ENCODE measurements at regions of chr16 and their contacts with region 1.

Region 1: GRCh38 chr16:88194397-88195268 is 188.1 kb upstream of the ZNF469 start:
- DNase-seq: no peak
- H3K4me3 ChIP-seq: peak overlapping the region in 4 of 59 donors; percentile 8 to 35 (median 20)
- H3K27ac ChIP-seq: peak overlapping the region in 8 of 59 donors; percentile 11 to 64 (median 30)
- H3K27me3 ChIP-seq: no peaks in the 10 kb centered on the region
- CTCF ChIP-seq: peak in 9 of 56 donors; percentile 2 to 52 (median 18)

Region 2: GRCh38 chr16:88383401-88384221 is 189.0 kb after region 1 on chr16:
- intact Hi-C with region 1: loop called in 1 of 2 experiments (anchors 10 kb)
- DNase-seq: peak in 4 of 10 donors; percentile 37 to 61 (median 50)
- H3K4me3 ChIP-seq: peak overlapping the region in 58 of 59 donors; percentile 15 to 67 (median 48)
- H3K27ac ChIP-seq: peak overlapping the region in 6 of 59 donors; percentile 33 to 67 (median 42)
- H3K27me3 ChIP-seq: peaks cover 0 to 40% (median 8%) of the 10 kb centered on the region in 45 donors
- CTCF ChIP-seq: peak in 47 of 56 donors; percentile 11 to 63 (median 38)

Region 3: DNA sequence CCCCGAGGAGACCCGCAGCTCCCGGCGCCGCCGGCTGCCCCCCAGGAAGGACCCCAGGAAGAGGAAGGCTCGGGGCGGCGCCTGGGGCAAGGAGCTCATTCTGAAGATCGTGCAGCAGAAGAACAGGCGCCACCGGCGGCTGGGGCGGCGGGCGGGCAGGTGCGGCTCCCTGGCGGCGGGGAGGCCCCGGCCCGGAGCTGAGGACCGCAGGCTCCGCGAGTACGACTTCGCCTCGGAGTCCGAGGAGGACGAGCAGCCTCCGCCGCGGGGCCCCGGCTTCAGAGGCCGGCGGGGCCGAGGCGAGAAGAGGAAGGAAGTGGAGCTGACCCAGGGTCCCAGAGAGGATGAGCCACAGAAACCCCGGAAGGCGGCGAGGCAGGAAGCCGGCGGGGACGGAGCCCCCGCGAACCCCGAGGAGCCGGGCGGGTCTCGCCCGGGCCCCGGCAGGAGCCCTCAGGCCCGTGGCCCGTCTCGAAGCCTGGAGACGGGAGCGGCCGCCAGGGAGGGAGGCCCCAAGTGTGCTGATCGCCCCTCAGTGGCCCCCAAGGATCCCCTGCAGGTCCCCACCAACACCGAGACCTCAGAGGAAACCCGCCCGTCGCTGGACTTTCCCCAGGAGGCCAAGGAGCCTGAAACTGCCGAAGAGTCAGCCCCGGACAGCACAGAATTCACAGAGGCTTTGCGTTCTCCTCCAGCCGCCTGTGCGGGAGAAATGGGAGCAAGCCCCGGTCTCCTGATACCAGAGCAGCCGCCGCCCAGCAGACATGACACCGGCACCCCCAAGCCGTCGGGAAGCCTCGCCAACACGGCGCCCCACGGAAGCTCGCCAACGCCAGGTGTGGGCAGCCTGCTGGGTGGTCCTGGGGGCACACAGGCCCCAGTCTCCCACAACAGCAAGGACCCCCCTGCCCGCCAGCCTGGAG is 236.2 kb after region 1 on chr16:
- intact Hi-C with region 1: loop called (anchors 5 kb)
- DNase-seq: no peak
- H3K4me3 ChIP-seq: peak overlapping the region in 56 of 59 donors; percentile 1 to 61 (median 43)
- H3K27ac ChIP-seq: peak overlapping the region in 36 of 59 donors; percentile 2 to 73 (median 50)
- H3K27me3 ChIP-seq: peaks cover 0 to 41% (median 12%) of the 10 kb centered on the region in 45 donors
- CTCF ChIP-seq: no peak

Region 4: DNA sequence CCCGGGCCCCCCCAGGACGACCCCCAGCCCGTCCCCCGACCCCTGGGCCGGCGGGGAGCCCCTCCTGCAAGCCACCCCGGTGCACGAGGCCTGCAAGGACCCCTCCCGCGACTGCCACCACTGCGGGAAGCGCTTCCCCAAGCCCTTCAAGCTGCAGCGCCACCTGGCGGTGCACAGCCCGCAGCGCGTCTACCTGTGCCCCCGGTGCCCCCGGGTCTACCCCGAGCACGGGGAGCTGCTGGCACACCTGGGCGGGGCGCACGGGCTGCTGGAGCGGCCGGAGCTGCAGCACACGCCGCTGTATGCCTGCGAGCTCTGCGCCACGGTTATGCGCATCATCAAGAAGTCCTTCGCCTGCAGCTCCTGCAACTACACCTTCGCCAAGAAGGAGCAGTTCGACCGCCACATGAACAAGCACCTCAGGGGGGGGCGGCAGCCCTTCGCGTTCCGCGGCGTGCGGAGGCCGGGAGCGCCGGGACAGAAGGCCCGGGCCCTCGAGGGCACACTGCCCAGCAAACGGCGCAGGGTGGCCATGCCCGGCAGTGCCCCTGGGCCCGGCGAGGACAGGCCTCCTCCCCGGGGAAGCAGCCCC is 242.8 kb after region 1 on chr16:
- intact Hi-C with region 1: loop called (anchors 5 kb)
- DNase-seq: peak in 2 of 10 donors; percentile 61 to 67
- H3K4me3 ChIP-seq: peak overlapping the region in 1 of 59 donors; percentile 5
- H3K27ac ChIP-seq: no peak overlapping the region
- H3K27me3 ChIP-seq: peaks cover 0 to 12% (median 0%) of the 10 kb centered on the region in 45 donors
- CTCF ChIP-seq: peak; percentile 46 to 94 (median 80)

Region 5: DNA sequence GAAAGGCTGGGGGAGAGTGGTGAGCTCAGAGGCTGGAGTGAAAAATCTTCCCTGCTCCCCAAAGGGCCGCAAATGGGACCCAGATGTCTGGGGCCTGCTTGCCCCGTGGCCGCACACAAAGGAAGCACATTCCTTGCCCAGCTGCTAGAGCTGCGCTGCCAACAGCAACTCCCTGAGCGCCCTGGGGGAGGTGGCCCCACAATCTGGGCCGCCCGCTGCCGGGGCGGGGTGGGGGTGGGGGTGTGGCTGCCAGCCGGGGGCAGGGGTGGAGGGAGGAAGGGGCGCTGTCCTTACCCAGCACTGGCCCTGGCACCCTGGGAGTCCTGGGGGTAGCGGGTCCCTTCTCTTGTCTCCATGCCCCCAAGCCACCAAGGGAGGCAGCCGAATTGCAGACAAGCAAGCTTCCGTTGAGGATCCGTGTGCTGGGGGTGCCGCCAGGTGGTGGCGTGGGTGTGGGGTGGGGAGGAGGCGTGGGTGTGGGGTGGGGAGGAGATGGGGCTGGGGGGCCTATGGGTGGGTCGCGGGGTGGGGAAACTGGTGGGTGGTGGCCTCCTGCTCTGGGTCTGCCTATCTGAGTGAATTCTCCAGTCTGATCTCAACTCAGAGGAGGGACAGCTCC is 720.2 kb after region 1 on chr16:
- intact Hi-C with region 1: no loop called
- DNase-seq: no peak
- H3K4me3 ChIP-seq: no peak overlapping the region
- H3K27ac ChIP-seq: no peak overlapping the region
- H3K27me3 ChIP-seq: peaks cover 0 to 8% (median 0%) of the 10 kb centered on the region in 45 donors
- CTCF ChIP-seq: no peak